ENCODE measurements at regions of chr11 and their contacts with region 1.

Region 1: DNA sequence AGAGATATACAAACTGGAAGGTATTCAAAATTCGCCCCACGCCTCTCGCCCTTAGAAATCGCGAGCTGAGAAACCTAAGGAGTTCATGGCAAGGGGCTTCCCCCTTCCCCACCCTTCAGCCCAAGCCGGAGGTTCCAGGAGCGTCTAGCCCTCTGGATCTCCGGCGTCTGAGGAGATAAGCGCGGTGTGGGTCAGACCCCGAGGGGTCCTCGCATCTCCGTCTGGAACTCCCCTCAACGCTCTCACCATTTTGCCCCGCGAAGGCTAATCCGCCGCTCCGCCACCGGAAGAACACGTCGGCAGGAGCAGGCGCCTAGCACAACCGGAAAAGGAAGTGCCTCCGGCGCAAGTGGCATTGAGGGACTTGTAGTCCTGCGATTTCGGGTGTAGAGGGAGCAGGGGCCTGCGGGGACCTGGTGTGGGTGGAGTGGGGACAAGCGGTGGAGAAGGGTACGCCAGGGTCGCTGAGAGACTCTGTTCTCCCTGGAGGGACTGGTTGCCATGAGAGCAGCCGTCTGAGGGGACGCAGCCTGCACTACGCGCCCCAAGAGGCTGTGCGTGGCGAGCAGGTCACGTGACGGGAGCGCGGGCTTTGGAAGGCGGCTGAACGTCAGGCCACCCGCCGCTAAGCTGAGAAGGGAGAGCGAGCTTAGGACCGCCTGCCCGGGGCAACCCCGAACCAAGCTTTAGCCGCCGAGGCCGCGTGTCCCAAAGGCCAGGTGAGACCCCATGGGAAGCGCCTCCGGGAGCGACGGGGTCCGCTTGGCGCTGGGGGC is at the starts of genes FEN1 and TMEM258:
- DNase-seq: peak; percentile 85 to 95 (median 93)
- H3K4me3 ChIP-seq: peak within 1 kb of the TSS; percentile 70 to 100 (median 94)
- H3K27ac ChIP-seq: peak within 1 kb of the TSS; percentile 87 to 100 (median 99)
- H3K27me3 ChIP-seq: no peaks in the 10 kb centered on the region
- CTCF ChIP-seq: peak in 36 of 56 donors; percentile 4 to 56 (median 33)
- total RNA-seq, gene FEN1: 4.7 to 24.3 (median 13.8) TPM
- total RNA-seq, gene TMEM258: 40.6 to 123 (median 65.5) TPM

Region 2: GRCh38 chr11:61747192-61747966 is 45.1 kb before region 1 on chr11:
- intact Hi-C with region 1: loop called (anchors 1 kb)
- DNase-seq: peak; percentile 67 to 92 (median 86)
- H3K4me3 ChIP-seq: peak overlapping the region in 1 of 59 donors; percentile 12
- H3K27ac ChIP-seq: peak overlapping the region in 57 of 59 donors; percentile 74 to 99 (median 92)
- H3K27me3 ChIP-seq: peaks cover 0 to 2% (median 0%) of the 10 kb centered on the region in 45 donors
- CTCF ChIP-seq: peak; percentile 57 to 99 (median 92)

Region 3: DNA sequence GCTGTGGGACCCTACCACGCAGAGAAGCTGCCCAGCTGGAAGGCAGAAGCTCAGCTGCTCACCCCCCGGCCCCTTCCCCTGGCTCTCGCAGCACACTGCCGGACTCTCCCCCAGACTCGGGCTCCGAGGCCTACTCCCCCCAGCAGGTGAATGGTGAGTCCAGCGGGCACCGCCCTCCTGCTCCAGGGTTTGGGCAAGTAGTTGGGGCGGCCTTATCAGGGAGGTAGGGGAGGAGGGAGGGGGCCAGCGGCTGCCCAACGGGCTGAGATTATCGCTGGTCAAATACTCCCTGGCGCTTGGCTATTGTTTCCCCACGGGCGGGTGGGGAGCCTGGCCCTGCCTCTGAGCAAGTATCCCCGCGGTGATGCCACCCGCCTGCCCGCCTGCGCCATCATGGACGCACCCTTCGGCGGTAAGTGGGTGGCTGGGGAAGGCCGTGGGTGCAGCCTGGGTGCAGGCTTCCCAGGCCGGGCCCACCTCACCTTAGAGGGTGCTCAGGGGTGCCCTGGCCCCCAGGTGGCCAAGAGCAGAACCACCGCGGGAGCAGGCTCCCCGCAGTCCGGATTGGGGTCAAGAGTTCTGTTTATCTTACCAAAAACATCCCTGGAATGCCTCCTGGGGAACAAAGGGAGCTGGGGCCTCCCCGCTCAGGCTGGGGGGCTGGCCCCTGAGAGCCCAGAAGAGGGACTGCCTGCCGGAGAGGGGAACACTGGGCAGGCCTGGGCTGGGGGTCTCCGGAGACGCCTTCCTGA is 23.2 kb before region 1 on chr11:
- intact Hi-C with region 1: no loop called
- DNase-seq: no peak
- H3K4me3 ChIP-seq: no peak overlapping the region
- H3K27ac ChIP-seq: peak overlapping the region in 44 of 59 donors; percentile 4 to 99 (median 57)
- H3K27me3 ChIP-seq: no peaks in the 10 kb centered on the region
- CTCF ChIP-seq: peak in 1 of 56 donors; percentile 16

Region 4: DNA sequence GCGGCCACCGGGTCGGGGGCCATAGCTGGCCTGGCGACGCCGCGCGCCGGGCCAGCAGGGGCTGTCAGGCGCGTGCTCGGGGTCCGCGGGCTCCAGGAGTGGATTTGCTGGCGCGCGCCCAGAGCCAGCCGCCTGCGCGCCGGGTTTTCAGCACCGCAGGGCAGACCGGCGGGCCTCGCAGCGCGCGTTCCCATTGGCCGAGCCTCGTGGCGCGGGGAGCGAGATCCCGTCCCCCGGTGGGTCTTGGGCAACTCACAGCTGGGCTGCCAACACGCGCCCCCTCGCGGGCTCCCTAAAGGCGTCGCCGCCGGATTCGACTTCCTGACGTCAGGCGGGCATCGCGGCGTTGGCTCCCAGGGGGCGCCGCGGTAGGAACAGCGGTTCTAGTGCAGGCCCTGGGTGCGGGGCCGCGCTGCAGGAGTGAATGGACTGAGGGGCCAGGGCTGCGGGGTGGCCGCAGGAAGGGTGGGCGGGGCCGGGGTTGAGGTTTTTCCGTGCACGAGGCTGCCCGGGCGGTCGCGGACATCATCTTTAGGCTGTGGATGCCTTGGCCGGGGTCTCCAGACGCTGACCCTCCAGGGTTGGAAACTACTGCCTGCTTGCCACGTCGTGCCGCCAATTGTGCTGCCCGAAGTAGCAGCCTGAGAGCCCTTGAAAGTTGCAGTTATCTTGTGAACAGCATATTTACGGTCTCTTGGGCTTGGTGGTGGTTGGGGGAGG is 24.4 kb after region 1 on chr11 and contains the start of gene FADS1:
- intact Hi-C with region 1: loop called in 1 of 2 experiments (anchors 2 kb)
- DNase-seq: peak; percentile 78 to 98 (median 95)
- H3K4me3 ChIP-seq: peak within 1 kb of the TSS; percentile 55 to 99 (median 87)
- H3K27ac ChIP-seq: peak within 1 kb of the TSS; percentile 91 to 100 (median 99)
- H3K27me3 ChIP-seq: no peaks in the 10 kb centered on the region
- CTCF ChIP-seq: peak; percentile 42 to 89 (median 71)
- total RNA-seq, gene FADS1: 47.3 to 195 (median 80.7) TPM

Region 5: DNA sequence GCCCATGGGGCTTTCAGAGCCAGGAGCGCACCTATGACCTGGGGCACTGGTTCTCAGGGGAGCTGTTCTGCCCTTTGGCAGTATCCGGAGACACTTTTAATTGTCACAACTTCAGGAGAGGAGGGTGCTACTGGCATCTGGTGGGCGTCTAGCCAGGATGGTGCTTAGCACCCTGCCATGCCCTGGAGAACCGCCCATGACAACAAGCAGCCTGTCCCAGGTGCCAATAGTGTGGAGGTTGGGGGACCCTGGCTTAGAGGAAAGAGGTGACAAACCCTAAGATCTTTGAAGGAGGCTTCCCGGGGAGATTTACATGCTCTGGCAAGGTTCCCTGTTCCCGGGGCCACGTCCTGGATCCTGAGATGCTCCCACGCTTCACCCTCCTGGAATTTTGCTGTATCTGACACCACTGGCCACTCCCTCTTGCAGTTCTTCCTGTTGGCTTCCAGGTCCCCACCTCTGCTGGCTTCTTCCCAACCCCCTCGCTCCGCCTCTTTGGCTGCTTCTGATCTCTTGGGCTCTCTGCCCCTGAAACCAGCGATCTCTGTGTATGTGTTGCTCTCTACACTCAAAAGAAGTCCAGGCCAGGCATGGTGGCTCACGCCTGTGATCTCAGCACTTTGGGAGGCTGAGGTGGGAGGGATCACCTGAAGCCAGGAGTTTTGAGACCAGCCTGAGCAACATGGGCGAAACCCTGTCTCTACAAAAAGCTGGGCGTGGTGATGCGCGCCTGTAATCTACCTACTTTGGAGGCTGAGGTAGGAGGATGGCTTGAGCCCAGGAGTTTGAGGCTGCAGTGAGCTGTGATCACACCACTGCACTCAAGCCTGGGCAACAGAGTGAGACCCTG is 67.8 kb after region 1 on chr11:
- intact Hi-C with region 1: no loop called
- DNase-seq: no peak
- H3K4me3 ChIP-seq: no peak overlapping the region
- H3K27ac ChIP-seq: peak overlapping the region in 2 of 59 donors; percentile 9 to 21
- H3K27me3 ChIP-seq: no peaks in the 10 kb centered on the region
- CTCF ChIP-seq: no peak

Region 6: DNA sequence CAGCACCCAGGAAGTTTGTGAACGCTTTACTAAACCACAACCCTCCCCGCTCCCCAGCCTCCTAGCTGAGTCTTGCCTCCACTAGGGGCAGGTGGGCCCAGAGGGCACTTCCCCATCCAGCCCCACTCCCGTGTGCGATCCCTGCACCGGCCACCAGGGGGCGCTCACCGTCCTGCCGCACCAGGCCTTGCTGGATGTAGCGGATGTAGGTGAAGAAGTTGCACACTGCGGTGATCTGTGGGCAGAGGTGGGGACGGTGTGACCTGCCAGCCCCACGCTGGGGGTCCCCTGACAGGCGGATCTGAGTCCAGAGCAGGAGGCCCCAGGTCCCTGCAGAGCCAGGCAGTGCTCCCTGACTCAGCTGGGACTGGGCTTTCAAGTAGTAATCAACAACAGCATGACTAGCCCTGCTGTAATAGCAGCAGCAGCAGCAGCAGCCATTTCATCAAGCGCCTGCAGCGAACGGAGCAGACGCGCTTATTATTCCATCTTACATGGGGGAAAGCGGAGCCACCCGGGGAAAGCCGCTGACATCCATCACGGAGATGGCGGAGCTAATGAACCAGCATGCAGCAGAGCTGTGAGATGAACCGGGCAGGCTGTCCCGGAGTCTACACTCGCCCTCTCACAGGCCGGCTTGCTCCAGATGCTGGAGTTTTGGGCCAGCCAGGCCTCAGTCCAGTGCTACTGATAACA is 106.8 kb after region 1 on chr11:
- intact Hi-C with region 1: loop called (anchors 2 to 5 kb)
- DNase-seq: peak; percentile 53 to 85 (median 72)
- H3K4me3 ChIP-seq: no peak overlapping the region
- H3K27ac ChIP-seq: peak overlapping the region in 50 of 59 donors; percentile 1 to 84 (median 56)
- H3K27me3 ChIP-seq: no peaks in the 10 kb centered on the region
- CTCF ChIP-seq: peak; percentile 99 to 100 (median 100)

Region 7: GRCh38 chr11:62108017-62108750 is 315.7 kb after region 1 on chr11:
- intact Hi-C with region 1: loop called (anchors 1 to 5 kb)
- DNase-seq: peak in 1 of 10 donors; percentile 49
- H3K4me3 ChIP-seq: no peak overlapping the region
- H3K27ac ChIP-seq: peak overlapping the region in 7 of 59 donors; percentile 4 to 47 (median 31)
- H3K27me3 ChIP-seq: no peaks in the 10 kb centered on the region
- CTCF ChIP-seq: peak; percentile 68 to 98 (median 90)